ENCODE measurements at regions of chr12 and their contacts with region 1.

Region 1: DNA sequence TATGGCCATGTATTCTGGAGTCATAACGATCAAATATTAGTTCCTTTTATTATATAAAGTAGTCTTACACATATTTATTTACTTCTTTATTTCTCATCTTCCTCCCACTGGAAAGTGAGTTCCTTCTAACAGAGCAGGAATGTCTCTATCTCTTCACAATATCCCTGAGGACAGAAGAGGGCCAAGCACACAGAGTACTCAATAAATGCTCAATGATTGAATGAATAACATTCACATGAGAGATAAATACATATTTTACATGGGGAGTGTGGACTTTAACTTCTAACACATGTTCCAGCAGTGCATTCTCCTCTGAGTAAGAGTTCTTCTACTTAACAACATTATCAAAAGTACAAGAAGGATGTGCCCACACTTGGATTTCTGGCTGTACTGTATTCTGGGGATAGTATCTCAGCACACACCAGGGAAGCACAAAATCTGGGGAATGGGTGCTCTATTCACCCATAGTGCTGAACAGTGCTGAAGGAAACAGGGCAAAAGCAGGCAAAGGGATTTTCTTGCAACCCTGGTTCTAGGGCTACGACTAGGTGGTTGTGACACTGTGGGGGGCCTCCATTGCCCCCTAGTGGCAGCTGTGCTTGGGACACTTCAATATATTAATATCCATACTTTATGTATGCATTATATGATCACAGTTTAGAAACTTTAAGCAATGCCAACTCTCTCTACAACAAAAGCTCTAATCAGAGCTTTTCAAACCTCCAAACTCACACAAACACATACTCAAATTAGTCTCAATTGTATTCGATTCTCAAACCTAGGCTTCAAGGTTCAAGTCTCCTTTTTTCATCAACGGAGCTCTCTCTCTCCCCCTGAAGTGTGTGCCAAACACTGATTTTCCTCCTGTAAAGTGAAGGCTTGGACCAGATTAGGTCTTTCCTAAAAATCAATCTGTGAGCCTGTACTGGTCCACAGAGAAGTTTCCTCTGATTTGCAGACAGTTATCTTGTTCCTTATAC is 115.5 kb downstream of the SLC2A13 start:
- DNase-seq: peak in 1 of 2 donors; percentile 70
- H3K4me3 ChIP-seq: no peak overlapping the region
- H3K27ac ChIP-seq: no peak overlapping the region
- H3K4me1 ChIP-seq: no peaks in the 10 kb centered on the region
- H3K27me3 ChIP-seq: no peaks in the 10 kb centered on the region
- CTCF ChIP-seq: peak; percentile 40 to 64 (median 49)

Region 2: GRCh38 chr12:39764944-39765560 is 225.4 kb before region 1 on chr12:
- intact Hi-C with region 1: loop called (anchors 2 kb)
- DNase-seq: no peak
- H3K4me3 ChIP-seq: no peak overlapping the region
- H3K27ac ChIP-seq: no peak overlapping the region
- H3K4me1 ChIP-seq: no peaks in the 10 kb centered on the region
- H3K27me3 ChIP-seq: no peaks in the 10 kb centered on the region
- CTCF ChIP-seq: peak; percentile 40 to 54 (median 49)

Region 3: DNA sequence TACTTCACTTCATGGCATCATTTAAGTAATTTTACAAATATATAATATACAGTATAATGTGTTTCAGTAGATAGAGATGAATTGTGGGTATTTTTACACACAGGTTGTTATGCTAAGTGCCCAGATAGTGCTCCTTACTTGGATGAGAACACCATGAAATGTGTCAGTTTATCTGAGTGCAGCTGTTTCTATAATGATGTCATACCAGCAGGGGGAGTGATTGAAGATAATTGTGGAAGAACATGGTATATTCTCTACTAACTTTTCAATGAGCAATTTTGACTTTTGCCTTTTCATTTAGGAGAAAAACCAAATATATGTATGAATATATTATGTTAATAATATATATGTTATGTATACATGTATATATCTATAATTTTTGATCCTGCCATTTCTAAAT is 456.0 kb after region 1 on chr12:
- intact Hi-C with region 1: no loop called
- DNase-seq: no peak
- H3K4me3 ChIP-seq: no peak overlapping the region
- H3K27ac ChIP-seq: no peak overlapping the region
- H3K4me1 ChIP-seq: no peaks in the 10 kb centered on the region
- H3K27me3 ChIP-seq: no peaks in the 10 kb centered on the region
- CTCF ChIP-seq: no peak

Measured in ascending aorta (tissue), 2 donors.